IMR-90 (cell line): ENCODE measurements at regions of chr1 and their contacts with region 1.

Region 1: DNA sequence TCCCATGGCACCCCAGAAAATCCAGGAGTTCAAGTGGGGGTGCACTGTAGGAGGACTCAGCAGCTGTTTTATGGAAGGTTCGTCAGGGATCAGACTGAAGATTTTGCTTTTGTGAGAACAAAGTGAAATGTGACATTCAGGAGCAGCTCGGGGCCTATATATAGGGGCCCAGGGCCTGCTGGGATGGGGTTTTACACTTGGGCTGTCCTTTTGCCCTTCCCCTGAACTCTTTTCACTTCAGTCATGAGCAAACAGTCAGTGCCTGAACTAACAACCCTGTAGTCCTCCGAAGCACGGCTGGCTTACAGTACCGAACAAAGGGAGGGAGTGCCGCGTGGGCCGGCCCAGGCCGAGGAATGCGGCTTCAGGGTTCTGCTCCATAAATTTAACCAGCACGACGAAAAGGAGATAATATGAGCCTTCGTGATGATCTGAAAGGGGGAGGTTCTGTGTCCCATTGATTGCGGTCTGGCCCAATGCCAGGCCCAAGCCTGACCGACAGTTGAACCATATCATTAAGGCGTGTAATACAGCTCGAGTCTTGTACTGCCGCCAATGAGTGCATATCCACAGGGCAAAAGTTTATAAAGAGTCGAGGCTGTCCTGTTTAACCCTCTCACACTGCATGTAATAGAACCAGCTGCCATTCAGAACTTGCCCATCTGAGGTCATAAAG is 139.9 kb downstream of the DHRS3 start:
- DNase-seq: peak; percentile 99
- ATAC-seq: peak; percentile 85
- H3K4me3 ChIP-seq: no peak overlapping the region
- H3K27ac ChIP-seq: peak overlapping the region; percentile 80
- H3K4me1 ChIP-seq: peaks cover 48% of the 10 kb centered on the region
- H3K27me3 ChIP-seq: no peaks in the 10 kb centered on the region
- CTCF ChIP-seq: no peak
- POLR2A ChIP-seq: no peak
- RAD21 ChIP-seq: no peak

Region 2: GRCh38 chr1:12407050-12407961 is 70.8 kb before region 1 on chr1:
- CTCF ChIA-PET with region 1: interaction called, 5 read pairs
- POLR2A ChIA-PET with region 1: interaction called, 10 read pairs
- dilution Hi-C with region 1: no loop called
- in situ Hi-C with region 1: no loop called
- intact Hi-C with region 1: loop called (anchors 2 kb)
- DNase-seq: peak; percentile 84
- ATAC-seq: peak; percentile 86
- H3K4me3 ChIP-seq: no peak overlapping the region
- H3K27ac ChIP-seq: peak overlapping the region; percentile 61; the same call in 1 of the 2 replicates
- H3K4me1 ChIP-seq: peaks cover 22% of the 10 kb centered on the region
- H3K27me3 ChIP-seq: no peaks in the 10 kb centered on the region
- CTCF ChIP-seq: peak; percentile 51
- POLR2A ChIP-seq: no peak
- RAD21 ChIP-seq: peak; percentile 66

Region 3: GRCh38 chr1:12456979-12457378 is 21.1 kb before region 1 on chr1:
- CTCF ChIA-PET with region 1: interaction called, 11 read pairs
- POLR2A ChIA-PET with region 1: no interaction called
- dilution Hi-C with region 1: no loop called
- in situ Hi-C with region 1: no loop called
- intact Hi-C with region 1: no loop called
- DNase-seq: peak; percentile 63
- ATAC-seq: peak; percentile 25
- H3K4me3 ChIP-seq: no peak overlapping the region
- H3K27ac ChIP-seq: peak overlapping the region; percentile 91
- H3K4me1 ChIP-seq: peaks cover 40% of the 10 kb centered on the region
- H3K27me3 ChIP-seq: no peaks in the 10 kb centered on the region
- CTCF ChIP-seq: no peak
- POLR2A ChIP-seq: no peak
- RAD21 ChIP-seq: no peak

Region 4: DNA sequence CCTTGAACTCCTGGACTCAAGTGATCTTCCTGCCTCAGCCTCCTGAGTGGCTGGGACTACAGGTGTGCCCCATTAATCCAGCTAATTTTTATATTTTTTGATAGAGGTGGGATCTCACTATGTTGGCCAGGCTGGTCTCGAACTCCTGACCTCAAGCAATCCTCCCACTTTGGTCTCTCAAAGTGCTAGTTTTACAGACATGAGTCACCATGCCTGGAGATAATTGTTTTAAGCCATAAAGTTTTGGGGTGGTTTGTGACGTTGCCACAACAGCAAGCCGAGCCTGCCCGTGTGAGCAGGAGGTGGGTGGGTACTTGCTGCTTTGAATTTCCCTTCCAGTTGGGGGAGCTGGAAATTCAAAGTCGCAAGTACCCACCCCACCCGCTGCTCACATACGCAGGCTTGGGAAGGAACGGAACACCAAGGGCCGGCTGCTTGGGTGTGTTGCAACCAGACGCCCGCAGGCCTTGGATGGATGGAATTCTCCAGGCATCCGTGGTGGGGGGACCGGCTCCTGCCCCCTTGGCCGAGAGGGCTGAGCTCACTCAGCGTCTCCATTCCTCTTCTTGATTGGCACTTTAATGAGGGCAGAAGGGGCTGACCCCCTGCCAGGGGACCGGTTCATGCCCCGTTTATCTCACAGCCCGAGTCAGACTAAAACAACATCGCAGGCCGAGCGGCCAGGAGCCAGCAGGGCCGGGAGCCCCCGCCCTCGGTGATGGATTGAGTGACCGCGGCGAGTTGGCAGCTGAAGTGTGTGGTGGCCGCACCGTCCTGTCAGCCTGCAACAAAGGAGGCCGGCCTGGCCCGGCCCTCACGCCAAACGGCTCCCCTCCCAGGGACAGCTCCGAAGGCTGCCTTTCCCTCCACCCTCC is 61.9 kb after region 1 on chr1:
- CTCF ChIA-PET with region 1: no interaction called
- POLR2A ChIA-PET with region 1: no interaction called
- dilution Hi-C with region 1: no loop called
- in situ Hi-C with region 1: no loop called
- intact Hi-C with region 1: loop called (anchors 5 kb)
- DNase-seq: peak; percentile 93
- ATAC-seq: peak; percentile 85
- H3K4me3 ChIP-seq: no peak overlapping the region
- H3K27ac ChIP-seq: peak overlapping the region; percentile 68
- H3K4me1 ChIP-seq: peaks cover 23% of the 10 kb centered on the region
- H3K27me3 ChIP-seq: peaks cover 3% of the 10 kb centered on the region; the same call in 1 of the 2 replicates
- CTCF ChIP-seq: peak; percentile 32
- POLR2A ChIP-seq: no peak
- RAD21 ChIP-seq: peak; percentile 38

Region 5: GRCh38 chr1:12669529-12670068 is 191.5 kb after region 1 on chr1:
- CTCF ChIA-PET with region 1: no interaction called
- POLR2A ChIA-PET with region 1: no interaction called
- dilution Hi-C with region 1: no loop called
- in situ Hi-C with region 1: no loop called
- intact Hi-C with region 1: no loop called
- DNase-seq: peak; percentile 9
- ATAC-seq: no peak
- H3K4me3 ChIP-seq: no peak overlapping the region
- H3K27ac ChIP-seq: no peak overlapping the region
- H3K4me1 ChIP-seq: no peaks in the 10 kb centered on the region
- H3K27me3 ChIP-seq: no peaks in the 10 kb centered on the region; the same call in 1 of the 2 replicates
- CTCF ChIP-seq: no peak
- POLR2A ChIP-seq: no peak
- RAD21 ChIP-seq: no peak